Breast epithelium (tissue), 4 donors: ENCODE measurements at regions of chr11 and their contacts with region 1.

Region 1: DNA sequence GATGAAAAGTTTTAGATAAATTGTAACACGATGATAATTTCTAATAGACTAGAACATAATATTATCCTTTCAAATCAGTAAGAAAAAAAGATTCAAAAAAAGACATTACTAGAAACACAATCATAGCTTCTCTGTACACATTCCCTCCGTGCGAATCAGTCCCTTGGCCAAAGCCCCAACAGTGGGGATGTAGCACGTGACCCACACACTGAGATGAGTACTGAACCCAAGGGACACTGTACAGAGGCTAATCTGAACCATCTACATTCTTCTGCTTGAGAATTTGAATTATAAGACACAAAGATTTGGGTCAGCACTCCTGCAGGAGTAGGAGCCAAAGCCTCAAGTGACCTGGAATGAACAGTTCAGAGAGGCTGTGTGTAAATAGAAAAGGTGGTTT is 353.7 kb downstream of the INSC start:
- DNase-seq: no peak
- H3K4me3 ChIP-seq: no peak overlapping the region
- H3K27ac ChIP-seq: no peak overlapping the region
- H3K4me1 ChIP-seq: no peaks in the 10 kb centered on the region
- H3K27me3 ChIP-seq: no peaks in the 10 kb centered on the region
- CTCF ChIP-seq: no peak
- POLR2A ChIP-seq: no peak

Region 2: GRCh38 chr11:15489266-15489665 is 20.8 kb after region 1 on chr11:
- intact Hi-C with region 1: loop called (anchors 2 kb)
- DNase-seq: no peak
- H3K4me3 ChIP-seq: no peak overlapping the region
- H3K27ac ChIP-seq: no peak overlapping the region
- H3K4me1 ChIP-seq: no peaks in the 10 kb centered on the region
- H3K27me3 ChIP-seq: no peaks in the 10 kb centered on the region
- CTCF ChIP-seq: no peak
- POLR2A ChIP-seq: no peak

Region 3: GRCh38 chr11:15525582-15525981 is 57.1 kb after region 1 on chr11:
- intact Hi-C with region 1: no loop called
- DNase-seq: no peak
- H3K4me3 ChIP-seq: no peak overlapping the region
- H3K27ac ChIP-seq: no peak overlapping the region
- H3K4me1 ChIP-seq: no peaks in the 10 kb centered on the region
- H3K27me3 ChIP-seq: no peaks in the 10 kb centered on the region
- CTCF ChIP-seq: no peak
- POLR2A ChIP-seq: no peak